Endothelial cell of umbilical vein (primary cell): ENCODE measurements at regions of chr3 and their contacts with region 1.

Region 1: DNA sequence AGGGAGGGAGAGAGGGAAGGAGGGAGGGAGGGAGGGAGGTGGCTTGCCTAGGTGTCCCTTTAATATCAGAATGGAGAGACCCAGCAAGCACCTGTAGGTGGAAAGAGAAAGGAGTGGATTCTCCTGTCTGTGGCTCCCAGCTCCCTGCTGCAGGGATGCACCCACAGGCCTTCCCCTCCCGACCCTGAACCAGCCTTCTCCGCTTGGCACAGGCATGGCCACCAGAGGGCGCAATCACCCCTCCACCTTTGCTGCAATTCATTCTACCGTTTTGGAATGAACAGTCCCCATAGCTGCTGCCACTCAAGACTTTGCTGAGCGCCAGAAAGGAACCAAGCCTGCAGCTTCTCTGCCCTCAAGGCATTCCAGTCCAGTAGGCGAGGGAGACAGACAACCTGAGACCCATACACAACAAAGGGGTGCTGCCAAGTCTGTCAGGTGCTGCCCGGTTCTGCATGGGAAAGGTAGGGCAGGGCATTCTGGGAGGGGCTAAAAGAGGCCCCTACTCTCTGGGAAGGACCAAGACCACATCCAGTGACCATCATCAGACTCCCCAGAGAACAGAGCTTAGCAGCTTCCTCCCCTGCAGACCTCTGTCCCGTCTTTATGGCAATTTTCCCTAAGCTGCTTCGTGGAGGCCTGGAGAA is 4.9 kb downstream of the TLR9 start:
- DNase-seq: peak; percentile 68
- H3K4me3 ChIP-seq: no peak overlapping the region
- H3K27ac ChIP-seq: no peak overlapping the region
- H3K4me1 ChIP-seq: peaks cover 32% of the 10 kb centered on the region
- H3K27me3 ChIP-seq: no peaks in the 10 kb centered on the region
- CTCF ChIP-seq: peak; percentile 92 to 97
- POLR2A ChIP-seq: no peak

Region 2: GRCh38 chr3:51082363-51082762 is 1138.1 kb before region 1 on chr3:
- CTCF ChIA-PET with region 1: no interaction called
- POLR2A ChIA-PET with region 1: no interaction called
- dilution Hi-C with region 1: no loop called
- intact Hi-C with region 1: no loop called
- DNase-seq: no peak
- H3K4me3 ChIP-seq: no peak overlapping the region
- H3K27ac ChIP-seq: no peak overlapping the region
- H3K4me1 ChIP-seq: no peaks in the 10 kb centered on the region
- H3K27me3 ChIP-seq: no peaks in the 10 kb centered on the region
- CTCF ChIP-seq: no peak
- POLR2A ChIP-seq: no peak

Region 3: GRCh38 chr3:51929420-51930003 is 291.0 kb before region 1 on chr3:
- CTCF ChIA-PET with region 1: no interaction called
- POLR2A ChIA-PET with region 1: no interaction called
- dilution Hi-C with region 1: no loop called
- intact Hi-C with region 1: no loop called
- DNase-seq: no peak
- H3K4me3 ChIP-seq: no peak overlapping the region
- H3K27ac ChIP-seq: no peak overlapping the region
- H3K4me1 ChIP-seq: no peaks in the 10 kb centered on the region
- H3K27me3 ChIP-seq: no peaks in the 10 kb centered on the region
- CTCF ChIP-seq: no peak
- POLR2A ChIP-seq: no peak

Region 4: DNA sequence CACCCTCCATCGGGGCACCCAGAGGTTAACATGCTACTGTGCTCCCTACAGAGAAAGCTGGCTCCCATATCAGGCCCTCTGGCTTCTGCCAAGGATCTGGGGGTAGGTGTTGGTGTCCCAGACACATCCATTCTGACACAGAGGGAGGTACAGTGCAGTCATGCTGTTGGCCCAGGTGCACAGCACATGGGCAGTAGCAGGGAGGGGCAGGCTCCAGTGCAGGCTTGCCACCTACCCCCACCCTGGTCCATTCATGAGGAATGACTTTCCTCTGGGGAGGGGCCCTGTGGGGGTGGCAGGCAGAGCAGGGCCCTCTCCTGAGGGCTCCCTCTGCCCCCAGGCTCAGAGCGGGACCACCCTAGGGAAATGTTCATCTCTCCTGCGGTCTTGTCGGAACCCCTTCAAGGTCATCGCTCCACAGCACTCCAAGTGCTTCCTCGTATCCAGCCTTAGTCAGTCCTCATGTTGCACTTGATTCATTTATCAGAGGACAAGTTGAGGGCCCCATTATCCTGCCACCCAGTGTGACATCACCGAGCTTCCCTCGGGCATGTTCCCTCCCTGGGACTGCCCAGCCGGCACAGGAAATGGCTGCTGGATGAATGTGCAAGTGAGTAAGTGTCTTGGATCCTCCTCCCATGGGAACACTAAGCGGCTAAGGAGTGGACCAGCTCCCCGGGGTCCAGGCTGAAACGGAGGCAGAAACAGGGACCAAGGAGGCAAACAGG is 174.2 kb before region 1 on chr3:
- CTCF ChIA-PET with region 1: no interaction called
- POLR2A ChIA-PET with region 1: no interaction called
- dilution Hi-C with region 1: no loop called
- intact Hi-C with region 1: loop called (anchors 2 kb)
- DNase-seq: peak; percentile 96
- H3K4me3 ChIP-seq: no peak overlapping the region
- H3K27ac ChIP-seq: peak overlapping the region; percentile 86
- H3K4me1 ChIP-seq: peaks cover 28% of the 10 kb centered on the region
- H3K27me3 ChIP-seq: no peaks in the 10 kb centered on the region
- CTCF ChIP-seq: no peak
- POLR2A ChIP-seq: peak; percentile 75

Region 5: DNA sequence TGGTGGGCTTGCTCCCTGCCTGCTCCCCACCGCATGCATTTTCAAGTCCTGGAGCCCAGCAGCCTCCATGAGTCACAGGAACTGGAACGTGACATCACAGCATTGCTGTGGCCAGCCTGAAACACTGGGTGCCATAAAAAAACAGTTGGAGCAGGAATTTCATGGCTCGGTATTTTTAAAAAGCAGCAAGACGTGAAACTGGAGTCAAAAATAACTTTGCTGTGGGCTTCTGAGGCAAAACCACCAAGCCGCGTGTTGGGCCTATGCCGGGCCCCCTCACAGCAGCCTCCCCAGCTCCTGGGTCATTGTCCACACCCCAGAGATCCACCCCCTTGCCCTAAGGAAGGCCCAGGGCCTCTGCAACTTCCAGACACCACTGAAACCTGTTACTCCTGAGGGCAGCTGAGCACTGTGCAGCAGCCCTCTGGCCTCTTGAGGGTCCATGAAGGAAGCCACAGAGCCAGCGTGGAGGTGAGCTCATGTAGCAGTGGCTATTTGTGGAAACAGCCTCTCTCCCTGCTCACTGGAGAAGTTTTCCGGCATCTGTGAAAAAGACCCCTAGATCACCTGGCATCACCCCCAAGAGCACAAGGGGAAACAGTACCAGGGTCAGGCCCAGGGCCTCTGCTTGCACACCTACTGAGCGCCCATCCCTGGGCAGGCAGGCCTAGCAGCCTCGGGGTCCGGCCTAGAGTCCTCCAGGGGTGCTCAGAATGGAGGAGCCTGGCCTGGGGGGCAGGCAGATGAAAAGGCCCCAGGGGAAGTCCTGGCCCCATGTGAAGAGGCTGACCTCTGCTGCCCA is 130.2 kb before region 1 on chr3:
- CTCF ChIA-PET with region 1: no interaction called
- POLR2A ChIA-PET with region 1: no interaction called
- dilution Hi-C with region 1: no loop called
- intact Hi-C with region 1: no loop called
- DNase-seq: peak; percentile 79
- H3K4me3 ChIP-seq: no peak overlapping the region
- H3K27ac ChIP-seq: peak overlapping the region; percentile 96
- H3K4me1 ChIP-seq: peaks cover 58% of the 10 kb centered on the region
- H3K27me3 ChIP-seq: no peaks in the 10 kb centered on the region
- CTCF ChIP-seq: no peak
- POLR2A ChIP-seq: no peak

Region 6: DNA sequence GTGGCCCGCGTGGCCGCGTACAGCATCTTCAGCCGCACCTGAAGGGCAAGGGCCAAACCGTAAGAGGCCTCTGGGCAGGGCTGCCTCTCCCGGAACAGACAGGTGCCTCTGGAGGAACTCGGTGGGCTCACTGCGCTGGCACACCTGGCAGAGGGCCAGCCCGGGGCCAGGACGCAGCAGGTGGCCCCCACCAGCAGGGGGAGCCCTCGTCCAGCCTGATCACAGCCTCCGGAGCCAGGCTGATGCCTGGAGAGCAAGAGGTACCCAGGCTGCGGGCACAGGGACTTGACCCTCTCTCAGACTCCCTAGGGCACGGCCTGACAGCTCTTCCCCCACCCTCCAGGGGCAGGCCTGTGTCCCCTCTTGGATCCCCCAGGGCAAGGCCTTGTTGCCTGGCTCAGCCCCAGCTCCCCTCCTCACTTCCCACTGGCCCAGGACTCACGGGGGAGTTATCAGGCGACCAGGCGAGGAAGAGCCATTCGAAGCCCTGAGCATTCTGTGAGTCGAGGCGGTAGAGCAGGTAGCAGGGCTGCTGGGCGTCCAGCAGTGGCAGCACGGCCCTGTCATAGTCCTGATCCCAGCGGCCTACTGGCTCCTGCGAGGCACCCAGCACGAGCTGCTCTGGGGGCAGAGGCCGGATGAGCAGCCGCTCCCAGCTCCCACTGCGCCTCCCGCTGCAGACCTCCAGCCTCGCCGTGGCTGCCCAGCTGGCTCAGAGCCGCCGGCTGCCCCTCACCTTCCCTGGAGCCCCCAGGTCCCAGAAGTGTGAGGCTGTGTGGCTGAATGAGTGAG is 11.2 kb after region 1 on chr3:
- CTCF ChIA-PET with region 1: interaction called, 104 read pairs
- POLR2A ChIA-PET with region 1: interaction called, 5 read pairs
- dilution Hi-C with region 1: no loop called
- intact Hi-C with region 1: no loop called
- DNase-seq: peak; percentile 54
- H3K4me3 ChIP-seq: no peak overlapping the region
- H3K27ac ChIP-seq: no peak overlapping the region
- H3K4me1 ChIP-seq: no peaks in the 10 kb centered on the region
- H3K27me3 ChIP-seq: no peaks in the 10 kb centered on the region
- CTCF ChIP-seq: peak; percentile 98
- POLR2A ChIP-seq: peak; percentile 36

Region 7: DNA sequence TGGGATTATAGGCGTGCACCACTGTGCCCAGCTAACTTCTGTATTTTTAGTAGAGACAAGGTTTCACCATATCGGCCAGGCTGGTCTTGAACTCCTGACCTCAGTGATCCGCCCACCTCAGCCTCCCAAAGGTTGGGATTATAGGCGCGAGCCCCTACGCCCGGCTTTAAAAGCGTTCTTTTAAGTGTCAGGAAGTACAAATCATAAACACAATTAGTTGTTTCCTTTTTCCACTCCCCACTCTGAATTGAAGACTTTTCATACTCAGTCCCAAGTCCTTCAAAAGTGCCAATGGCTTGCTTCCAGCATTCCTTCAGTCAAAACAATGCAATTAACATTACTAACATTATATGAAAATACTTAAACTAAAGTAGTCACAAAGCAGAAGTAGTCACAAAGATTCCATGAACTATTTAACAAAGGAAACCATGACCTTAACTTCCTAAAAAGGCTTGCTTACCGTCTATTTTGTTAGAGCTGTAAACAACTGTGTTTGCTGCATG is 49.8 kb after region 1 on chr3:
- CTCF ChIA-PET with region 1: interaction called, 13 read pairs
- POLR2A ChIA-PET with region 1: no interaction called
- dilution Hi-C with region 1: no loop called
- intact Hi-C with region 1: no loop called
- DNase-seq: peak; percentile 93
- H3K4me3 ChIP-seq: no peak overlapping the region
- H3K27ac ChIP-seq: peak overlapping the region; percentile 66
- H3K4me1 ChIP-seq: peaks cover 38% of the 10 kb centered on the region
- H3K27me3 ChIP-seq: no peaks in the 10 kb centered on the region
- CTCF ChIP-seq: no peak
- POLR2A ChIP-seq: no peak

Region 8: GRCh38 chr3:52299879-52300611 is 79.5 kb after region 1 on chr3:
- CTCF ChIA-PET with region 1: interaction called, 10 read pairs
- POLR2A ChIA-PET with region 1: no interaction called
- dilution Hi-C with region 1: no loop called
- intact Hi-C with region 1: no loop called
- DNase-seq: peak; percentile 62
- H3K4me3 ChIP-seq: no peak overlapping the region
- H3K27ac ChIP-seq: no peak overlapping the region
- H3K4me1 ChIP-seq: peaks cover 15% of the 10 kb centered on the region
- H3K27me3 ChIP-seq: no peaks in the 10 kb centered on the region
- CTCF ChIP-seq: peak in 1 of 2 donors; percentile 24
- POLR2A ChIP-seq: no peak